H1 (cell line): ENCODE measurements at regions of chr7 and their contacts with region 1.

Region 1: DNA sequence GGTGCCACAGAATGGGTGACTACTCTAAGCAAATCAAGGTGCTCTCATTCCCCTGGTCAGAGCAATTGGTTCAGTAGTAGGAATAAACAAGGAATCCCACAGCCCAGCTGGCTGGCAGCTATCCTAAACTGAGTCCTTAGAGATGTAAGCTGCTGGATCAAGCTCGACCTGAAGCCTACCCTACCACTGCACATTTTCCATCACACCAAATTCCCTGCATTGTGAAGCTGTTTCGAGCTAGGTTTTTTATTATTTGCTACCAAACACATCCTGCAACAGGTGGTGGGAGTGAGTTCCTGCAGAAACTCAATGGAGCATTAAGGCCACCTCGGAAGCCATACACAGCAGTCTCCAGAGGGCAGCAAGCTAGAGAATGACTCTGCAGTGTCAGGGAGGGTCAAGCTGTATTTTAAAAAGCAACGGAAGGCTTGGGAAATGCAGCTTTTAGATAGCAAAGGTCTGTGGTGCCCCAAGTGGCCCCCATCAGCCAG is 33.7 kb upstream of the TNRC18 start:
- DNase-seq: no peak
- H3K4me3 ChIP-seq: no peak overlapping the region
- H3K27ac ChIP-seq: no peak overlapping the region
- H3K4me1 ChIP-seq: peaks cover 0 to 3% (median 0%) of the 10 kb centered on the region in 4 experiments; a peak in 1 of 7 replicates
- H3K27me3 ChIP-seq: no peaks in the 10 kb centered on the region
- CTCF ChIP-seq: no peak
- EP300 ChIP-seq: no peak
- POLR2A ChIP-seq: no peak
- RAD21 ChIP-seq: no peak

Region 2: DNA sequence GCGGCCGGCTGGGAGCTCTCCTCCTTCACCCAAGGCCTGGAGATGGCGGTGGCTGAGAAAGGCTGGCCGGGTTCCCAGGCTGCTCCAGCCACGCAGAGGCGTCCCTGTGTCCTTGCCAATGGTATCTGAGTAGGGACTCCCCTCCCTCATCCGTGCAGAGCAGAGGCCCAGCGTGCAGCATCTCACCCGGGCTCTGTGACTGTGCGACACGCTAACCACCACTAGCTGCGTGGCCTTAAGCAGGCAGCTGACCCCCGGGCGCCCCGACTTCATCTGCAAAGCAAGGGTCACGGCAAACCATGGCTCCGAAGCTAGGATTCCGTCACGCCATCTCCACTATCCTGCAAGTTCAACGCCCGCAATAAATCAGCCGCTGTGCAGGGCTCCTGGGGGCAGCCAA is 13.5 kb after region 1 on chr7:
- CTCF ChIA-PET with region 1: interaction called, 15 read pairs
- POLR2A ChIA-PET with region 1: interaction called, 5 read pairs
- DNase-seq: no peak
- H3K4me3 ChIP-seq: no peak overlapping the region
- H3K27ac ChIP-seq: no peak overlapping the region; the same call in 1 of the 2 replicates
- H3K4me1 ChIP-seq: no peaks in the 10 kb centered on the region
- H3K27me3 ChIP-seq: no peaks in the 10 kb centered on the region
- CTCF ChIP-seq: no peak
- EP300 ChIP-seq: no peak
- POLR2A ChIP-seq: no peak
- RAD21 ChIP-seq: no peak

Region 3: GRCh38 chr7:5477723-5478531 is 20.6 kb after region 1 on chr7:
- CTCF ChIA-PET with region 1: interaction called, 18 read pairs
- POLR2A ChIA-PET with region 1: interaction called, 3 read pairs
- DNase-seq: peak in 1 of 2 experiments; percentile 76
- H3K4me3 ChIP-seq: 0 out of 8 replicates have a peak overlapping the region, but pooled peaks of 1 of the 4 experiments have one; percentile 25
- H3K27ac ChIP-seq: no peak overlapping the region
- H3K4me1 ChIP-seq: peaks cover 0 to 16% (median 8%) of the 10 kb centered on the region in 4 experiments; a peak in 5 of 7 replicates
- H3K27me3 ChIP-seq: no peaks in the 10 kb centered on the region
- CTCF ChIP-seq: peak in 2 of 3 experiments; percentile 56 to 59; a peak in 3 of 4 replicates
- EP300 ChIP-seq: no peak
- POLR2A ChIP-seq: no peak
- RAD21 ChIP-seq: peak; percentile 39 to 49